Activated naive CD4-positive, alpha-beta T cell treated with anti-CD3 and anti-CD28 coated beads for 36 hours (primary cell): ENCODE measurements at regions of chr18 and their contacts with region 1.

Region 1: GRCh38 chr18:5295981-5296705 is 617 bp upstream of the ZBTB14 start:
- DNase-seq: peak; percentile 93
- H3K4me3 Mint-ChIP-seq: peak overlapping the region; percentile 93
- H3K27ac Mint-ChIP-seq: peak overlapping the region; percentile 94
- H3K4me1 Mint-ChIP-seq: peaks cover 22% of the 10 kb centered on the region
- H3K27me3 Mint-ChIP-seq: no peaks in the 10 kb centered on the region

Region 2: DNA sequence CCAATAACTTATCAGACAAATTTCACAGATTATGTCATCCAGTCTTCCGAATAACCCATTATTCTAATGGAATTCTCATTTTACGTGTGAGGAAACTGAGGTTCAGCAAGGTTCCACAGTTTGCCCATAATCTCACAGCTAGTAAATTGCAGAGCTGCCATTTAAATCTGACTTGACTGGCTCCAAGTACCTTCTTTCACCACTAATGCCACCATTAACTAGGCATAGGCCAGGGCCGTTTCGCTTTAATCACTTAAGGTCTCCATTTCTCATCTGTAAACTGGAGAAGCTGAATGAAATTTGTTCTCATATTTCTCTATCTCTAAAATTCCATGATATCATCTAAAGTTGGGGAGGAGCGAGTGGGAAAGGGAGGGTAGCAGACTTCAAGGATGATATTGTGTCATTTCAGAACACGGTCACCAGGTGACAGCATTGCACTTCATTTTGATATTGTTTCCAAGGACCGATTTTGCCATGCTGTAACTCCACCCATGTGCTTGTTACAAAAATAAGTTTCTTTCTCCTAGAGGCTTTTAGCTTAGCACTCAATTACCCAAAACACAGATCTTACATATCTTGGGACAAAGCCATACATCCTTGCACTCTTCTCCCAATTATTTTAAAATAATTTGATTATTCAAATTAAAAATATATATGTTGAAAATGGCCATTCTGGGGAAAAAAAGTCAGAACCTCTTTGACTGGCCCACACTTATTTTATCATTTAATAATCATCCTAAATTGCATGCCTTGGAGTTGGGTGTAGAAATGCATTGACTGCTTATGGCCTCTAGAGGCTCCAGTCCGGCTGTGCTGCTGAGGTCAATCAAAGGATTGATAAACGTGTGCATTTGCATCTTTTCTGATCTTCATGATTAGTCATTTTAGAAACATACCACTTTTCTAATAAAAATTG is 222.9 kb before region 1 on chr18:
- CTCF ChIA-PET with region 1: no interaction called
- intact Hi-C with region 1: loop called (anchors 5 kb)
- DNase-seq: peak; percentile 34
- H3K4me3 Mint-ChIP-seq: no peak overlapping the region
- H3K27ac Mint-ChIP-seq: no peak overlapping the region
- H3K4me1 Mint-ChIP-seq: peaks cover 3% of the 10 kb centered on the region
- H3K27me3 Mint-ChIP-seq: no peaks in the 10 kb centered on the region

Region 3: GRCh38 chr18:5159080-5159479 is 137.1 kb before region 1 on chr18:
- CTCF ChIA-PET with region 1: interaction called, 3 read pairs
- intact Hi-C with region 1: loop called (anchors 1 kb)
- DNase-seq: peak; percentile 37
- H3K4me3 Mint-ChIP-seq: peak overlapping the region; percentile 41
- H3K27ac Mint-ChIP-seq: peak overlapping the region; percentile 80
- H3K4me1 Mint-ChIP-seq: peaks cover 35% of the 10 kb centered on the region
- H3K27me3 Mint-ChIP-seq: no peaks in the 10 kb centered on the region

Region 4: DNA sequence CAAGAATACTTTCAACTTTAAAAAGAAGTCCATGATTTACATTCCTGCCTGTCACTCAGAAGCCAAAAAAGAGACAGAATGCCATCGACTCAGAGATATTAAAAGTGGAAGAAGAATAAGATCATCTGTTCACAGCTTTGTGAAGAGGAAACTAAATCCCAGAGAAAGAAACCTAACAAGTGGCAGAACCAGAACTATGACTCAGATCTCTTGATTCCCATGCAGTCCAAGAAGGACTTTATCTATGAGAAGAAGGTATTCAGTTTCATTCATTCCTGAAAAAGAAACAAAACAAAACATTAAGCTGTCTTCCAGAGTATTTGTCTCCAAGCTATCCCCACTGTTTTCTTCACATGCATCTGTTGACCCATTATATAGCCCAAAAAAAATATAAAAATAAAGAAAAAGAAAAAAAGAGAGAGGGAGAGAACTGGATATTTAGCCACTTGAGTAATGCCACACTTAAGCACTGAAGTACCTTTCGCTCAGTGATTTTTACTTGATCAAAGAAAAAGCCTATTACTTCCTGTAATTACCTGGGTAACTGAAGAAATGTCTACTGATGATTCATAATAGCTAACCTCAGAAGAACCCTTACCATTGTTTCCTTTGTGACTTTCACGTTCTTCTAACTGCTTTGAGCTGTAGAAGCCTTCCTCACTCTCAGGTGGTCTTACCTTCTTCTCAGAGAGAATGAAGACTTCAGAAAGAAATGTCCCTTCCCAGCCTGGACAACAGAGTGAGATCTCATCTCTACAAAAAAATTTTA is 81.4 kb before region 1 on chr18:
- CTCF ChIA-PET with region 1: no interaction called
- intact Hi-C with region 1: loop called (anchors 1 kb)
- DNase-seq: no peak
- H3K4me3 Mint-ChIP-seq: no peak overlapping the region
- H3K27ac Mint-ChIP-seq: peak overlapping the region; percentile 10
- H3K4me1 Mint-ChIP-seq: peaks cover 20% of the 10 kb centered on the region
- H3K27me3 Mint-ChIP-seq: no peaks in the 10 kb centered on the region

Region 5: DNA sequence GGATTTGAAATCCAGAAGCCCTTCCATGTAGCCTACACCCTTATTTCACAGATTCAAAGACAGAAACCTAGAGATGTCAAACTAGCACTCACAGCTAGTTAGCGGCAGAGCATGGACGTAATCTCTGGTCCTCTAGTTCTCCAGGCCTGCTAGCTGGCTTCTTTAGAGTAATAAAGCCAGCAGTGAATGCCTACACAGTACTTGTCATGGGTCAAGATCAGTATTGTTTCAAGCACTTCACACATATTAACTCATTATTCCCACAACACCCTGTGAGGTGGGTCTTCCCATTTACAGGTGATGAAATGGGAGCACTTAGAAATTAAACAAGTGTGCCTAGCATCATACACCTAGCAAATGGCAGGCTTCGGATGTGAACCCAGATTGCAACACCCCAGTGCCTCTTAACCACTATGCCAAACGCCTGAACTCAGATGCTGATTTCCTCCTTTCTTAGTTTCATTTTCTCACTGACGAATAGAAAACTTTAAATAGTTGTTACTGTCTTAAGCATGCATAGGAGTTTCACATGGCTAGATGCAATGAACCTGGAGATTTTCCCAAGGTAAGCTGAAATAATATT is 13.8 kb after region 1 on chr18:
- CTCF ChIA-PET with region 1: interaction called, 4 read pairs
- intact Hi-C with region 1: loop called (anchors 1 kb)
- DNase-seq: peak; percentile 64
- H3K4me3 Mint-ChIP-seq: peak overlapping the region; percentile 73
- H3K27ac Mint-ChIP-seq: peak overlapping the region; percentile 56
- H3K4me1 Mint-ChIP-seq: peaks cover 22% of the 10 kb centered on the region
- H3K27me3 Mint-ChIP-seq: no peaks in the 10 kb centered on the region

Region 6: DNA sequence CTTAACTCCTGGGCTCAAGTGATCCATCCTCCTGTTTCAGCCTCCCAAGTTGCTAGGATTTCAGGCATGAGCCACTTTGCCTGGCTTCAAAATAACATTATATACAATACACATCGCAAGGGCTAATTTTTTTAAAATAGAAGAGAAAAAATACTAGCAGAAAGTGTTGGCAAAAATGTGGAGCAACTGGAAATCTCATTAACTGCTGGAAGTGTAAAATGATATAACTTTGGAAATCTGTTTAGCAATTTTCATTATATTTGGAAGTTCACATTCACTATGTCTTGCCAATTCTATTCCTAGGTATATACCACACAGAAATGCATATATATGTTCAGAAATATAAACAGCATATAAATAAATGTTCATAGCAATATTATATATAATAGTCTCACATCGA is 54.5 kb after region 1 on chr18:
- CTCF ChIA-PET with region 1: no interaction called
- intact Hi-C with region 1: no loop called
- DNase-seq: no peak
- H3K4me3 Mint-ChIP-seq: no peak overlapping the region
- H3K27ac Mint-ChIP-seq: no peak overlapping the region
- H3K4me1 Mint-ChIP-seq: no peaks in the 10 kb centered on the region
- H3K27me3 Mint-ChIP-seq: no peaks in the 10 kb centered on the region

Region 7: DNA sequence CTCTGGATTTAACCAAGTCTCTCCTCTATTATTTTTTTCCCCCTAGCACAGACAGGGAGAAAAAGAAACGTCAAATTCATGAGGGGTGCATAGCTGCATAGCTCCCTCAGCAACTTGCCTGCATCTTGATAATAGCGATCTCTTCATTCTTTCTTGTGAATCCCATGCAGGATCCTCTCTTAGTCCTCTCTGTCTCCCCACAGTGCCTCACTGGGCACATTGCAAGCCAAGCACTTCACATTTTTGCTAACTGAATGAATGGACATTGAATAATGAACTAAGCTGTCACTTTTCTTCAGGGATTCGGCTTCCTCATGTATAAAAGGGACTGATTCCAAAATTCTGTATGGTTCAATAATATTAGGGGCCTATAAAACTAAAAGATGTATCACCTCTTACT is 250.5 kb after region 1 on chr18:
- CTCF ChIA-PET with region 1: no interaction called
- intact Hi-C with region 1: loop called (anchors 10 kb)
- DNase-seq: peak; percentile 11
- H3K4me3 Mint-ChIP-seq: no peak overlapping the region
- H3K27ac Mint-ChIP-seq: no peak overlapping the region
- H3K4me1 Mint-ChIP-seq: peaks cover 8% of the 10 kb centered on the region
- H3K27me3 Mint-ChIP-seq: peaks cover 36% of the 10 kb centered on the region

Region 8: DNA sequence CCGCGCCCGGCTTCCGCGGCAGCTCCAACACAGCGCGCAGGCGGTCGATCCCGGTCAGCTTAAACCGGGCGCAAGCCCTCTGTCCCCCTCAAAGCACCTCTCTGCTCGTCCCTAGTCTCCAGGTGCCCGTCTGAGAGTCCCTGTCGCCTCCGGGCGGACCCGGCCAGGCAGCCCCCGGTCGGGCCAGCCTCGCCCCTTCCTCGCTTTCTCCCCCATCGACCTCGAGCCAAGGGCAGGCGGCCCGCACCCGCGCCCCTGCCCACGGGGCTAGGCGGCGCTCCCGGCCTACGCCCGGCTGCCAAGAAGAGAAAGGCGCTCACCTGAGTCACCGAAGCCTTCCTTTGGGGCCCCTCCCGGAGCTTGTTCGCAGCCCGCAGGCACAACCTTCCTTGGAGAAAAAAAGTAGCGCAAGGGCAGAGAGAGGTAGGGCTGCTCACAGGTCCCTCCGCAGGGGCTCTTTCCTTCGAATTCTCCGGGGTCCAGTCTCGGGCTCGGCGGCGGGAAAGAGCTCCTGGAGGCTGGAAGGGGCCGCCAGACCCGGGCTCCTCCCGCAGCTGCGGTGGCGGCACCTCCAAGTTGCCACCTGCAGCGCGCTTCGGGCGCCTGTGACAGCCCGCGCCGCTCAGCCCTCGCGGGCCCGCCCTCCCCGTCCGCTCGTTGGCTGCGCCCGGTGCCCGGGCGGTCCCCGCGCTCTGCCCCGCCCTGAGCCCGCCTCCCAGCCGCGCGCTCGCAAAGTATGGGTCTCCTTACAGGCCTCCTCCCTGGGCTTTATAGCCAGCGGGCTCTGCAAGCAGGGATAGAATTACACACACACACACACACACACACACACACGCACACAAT is 334.1 kb after region 1 on chr18:
- CTCF ChIA-PET with region 1: no interaction called
- intact Hi-C with region 1: loop called (anchors 10 kb)
- DNase-seq: peak; percentile 56
- H3K4me3 Mint-ChIP-seq: peak overlapping the region; percentile 69
- H3K27ac Mint-ChIP-seq: no peak overlapping the region
- H3K4me1 Mint-ChIP-seq: no peaks in the 10 kb centered on the region
- H3K27me3 Mint-ChIP-seq: peaks cover 30% of the 10 kb centered on the region